Ascending aorta (tissue), 2 donors: ENCODE measurements at regions of chr3 and their contacts with region 1.

Region 1: GRCh38 chr3:185152410-185153210 is at the start of gene C3orf70:
- DNase-seq: peak in 1 of 2 donors; percentile 80
- H3K4me3 ChIP-seq: peak within 1 kb of the TSS; percentile 59 to 92
- H3K27ac ChIP-seq: peak within 1 kb of the TSS; percentile 88 to 93
- H3K4me1 ChIP-seq: peaks cover 3% of the 10 kb centered on the region in 2 donors
- H3K27me3 ChIP-seq: no peaks in the 10 kb centered on the region
- CTCF ChIP-seq: no peak
- total RNA-seq, gene C3orf70: 16.5 TPM

Region 2: DNA sequence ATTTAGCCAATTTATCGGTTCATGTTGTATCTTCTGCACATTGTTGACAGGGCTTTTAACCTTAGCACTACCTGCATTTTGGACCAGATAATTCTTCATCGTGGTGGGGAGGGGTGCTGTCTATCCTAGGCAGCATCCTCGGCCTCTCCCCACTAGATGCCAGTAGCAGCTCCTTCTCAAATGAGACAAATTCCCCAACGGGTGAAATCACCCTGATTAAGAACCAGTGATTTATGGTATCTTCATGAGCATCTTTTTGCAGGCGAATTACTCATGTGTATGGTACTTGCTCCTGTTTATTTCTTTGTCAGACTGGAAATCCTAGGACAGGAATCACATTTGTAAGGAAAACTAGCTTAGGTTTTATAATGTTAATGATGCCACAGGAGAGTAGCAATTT is 67.7 kb before region 1 on chr3:
- intact Hi-C with region 1: loop called (anchors 5 kb)
- DNase-seq: no peak
- H3K4me3 ChIP-seq: no peak overlapping the region
- H3K27ac ChIP-seq: no peak overlapping the region
- H3K4me1 ChIP-seq: no peaks in the 10 kb centered on the region
- H3K27me3 ChIP-seq: no peaks in the 10 kb centered on the region
- CTCF ChIP-seq: no peak